Colonic mucosa (tissue), 4 donors: ENCODE measurements at regions of chr17 and their contacts with region 1.

Region 1: GRCh38 chr17:7887482-7888183 is 956 bp upstream of the CHD3 start:
- DNase-seq: peak; percentile 95
- H3K4me3 ChIP-seq: peak overlapping the region; percentile 86
- H3K27ac ChIP-seq: peak overlapping the region; percentile 99
- H3K4me1 ChIP-seq: peaks cover 23% of the 10 kb centered on the region
- H3K27me3 ChIP-seq: no peaks in the 10 kb centered on the region
- CTCF ChIP-seq: no peak

Region 2: DNA sequence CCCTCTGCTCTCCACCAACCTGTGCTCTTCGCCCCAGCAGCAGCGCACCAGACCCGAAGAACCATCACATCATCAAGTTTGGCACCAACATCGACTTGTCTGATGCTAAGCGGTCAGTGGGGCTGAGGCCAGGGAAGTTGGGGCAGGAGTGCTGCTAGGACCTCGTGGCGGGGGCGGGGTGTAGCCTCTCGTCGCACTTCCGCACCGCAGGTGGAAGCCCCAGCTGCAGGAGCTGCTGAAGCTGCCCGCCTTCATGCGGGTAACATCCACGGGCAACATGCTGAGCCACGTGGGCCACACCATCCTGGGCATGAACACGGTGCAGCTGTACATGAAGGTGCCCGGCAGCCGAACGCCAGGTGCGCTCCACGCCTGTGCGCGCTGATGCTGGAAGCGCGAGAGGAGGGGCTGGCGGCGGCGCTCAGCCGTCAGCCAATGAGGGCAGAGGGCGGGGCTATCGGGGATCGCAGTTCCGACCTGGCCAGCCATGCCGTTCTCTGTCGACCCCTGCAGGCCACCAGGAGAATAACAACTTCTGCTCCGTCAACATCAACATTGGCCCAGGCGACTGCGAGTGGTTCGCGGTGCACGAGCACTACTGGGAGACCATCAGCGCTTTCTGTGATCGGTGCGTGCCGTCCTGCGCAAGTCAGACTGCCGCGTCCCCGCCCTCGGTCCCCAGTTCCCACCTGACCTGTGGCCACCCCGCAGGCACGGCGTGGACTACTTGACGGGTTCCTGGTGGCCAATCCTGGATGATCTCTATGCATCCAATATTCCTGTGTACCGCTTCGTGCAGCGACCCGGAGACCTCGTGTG is 36.0 kb before region 1 on chr17:
- intact Hi-C with region 1: no loop called
- DNase-seq: peak; percentile 92
- H3K4me3 ChIP-seq: no peak overlapping the region
- H3K27ac ChIP-seq: no peak overlapping the region
- H3K4me1 ChIP-seq: peaks cover 9% of the 10 kb centered on the region
- H3K27me3 ChIP-seq: no peaks in the 10 kb centered on the region
- CTCF ChIP-seq: peak; percentile 94

Region 3: DNA sequence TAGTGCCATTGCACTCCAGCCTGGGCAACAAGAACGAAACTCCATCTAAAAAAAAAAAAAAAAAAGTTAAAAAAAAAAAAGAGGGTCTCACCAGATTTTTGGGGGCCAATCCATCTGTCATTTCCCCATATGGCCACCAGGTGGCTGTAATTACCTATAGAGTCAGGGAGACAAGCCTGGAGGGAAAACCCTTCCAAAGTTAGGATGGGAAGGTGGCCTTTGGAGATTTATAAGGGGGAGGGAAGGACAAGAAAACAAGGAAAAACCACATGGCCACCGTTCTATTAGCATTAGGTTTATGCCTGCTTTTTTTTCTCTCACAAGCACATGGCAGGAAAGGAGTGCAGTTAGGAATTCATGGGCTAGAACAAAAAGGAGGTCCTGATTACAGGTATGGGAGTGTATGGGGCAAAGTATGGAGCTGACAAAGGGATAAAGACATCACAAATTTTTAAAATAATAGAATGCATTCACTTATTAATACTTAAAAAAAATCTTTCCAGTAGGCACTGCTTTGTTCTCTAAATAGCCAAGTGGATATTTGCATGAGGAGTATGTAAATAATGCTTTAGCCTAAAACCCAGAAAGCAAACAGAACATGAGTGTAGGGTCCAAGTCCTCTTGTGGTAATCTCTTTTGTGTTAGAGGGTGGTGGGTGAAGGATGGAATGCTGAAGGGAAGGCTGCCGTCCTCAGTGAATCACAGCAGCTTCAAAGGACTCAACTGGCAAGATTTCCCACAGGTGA is 24.8 kb before region 1 on chr17:
- intact Hi-C with region 1: loop called (anchors 2 kb)
- DNase-seq: peak; percentile 69
- H3K4me3 ChIP-seq: no peak overlapping the region
- H3K27ac ChIP-seq: no peak overlapping the region
- H3K4me1 ChIP-seq: peaks cover 10% of the 10 kb centered on the region
- H3K27me3 ChIP-seq: no peaks in the 10 kb centered on the region
- CTCF ChIP-seq: peak; percentile 79